ENCODE measurements at regions of chr4 and their contacts with region 1.

Region 1: GRCh38 chr4:55321707-55322264 is 24.3 kb upstream of the SRD5A3 start:
- DNase-seq: no peak
- ATAC-seq: peak in 1 of 2 donors; percentile 65
- H3K4me3 ChIP-seq: no peak overlapping the region
- H3K27ac ChIP-seq: no peak overlapping the region
- H3K4me1 ChIP-seq: no peaks in the 10 kb centered on the region
- H3K27me3 ChIP-seq: no peaks in the 10 kb centered on the region
- CTCF ChIP-seq: peak; percentile 66

Region 2: DNA sequence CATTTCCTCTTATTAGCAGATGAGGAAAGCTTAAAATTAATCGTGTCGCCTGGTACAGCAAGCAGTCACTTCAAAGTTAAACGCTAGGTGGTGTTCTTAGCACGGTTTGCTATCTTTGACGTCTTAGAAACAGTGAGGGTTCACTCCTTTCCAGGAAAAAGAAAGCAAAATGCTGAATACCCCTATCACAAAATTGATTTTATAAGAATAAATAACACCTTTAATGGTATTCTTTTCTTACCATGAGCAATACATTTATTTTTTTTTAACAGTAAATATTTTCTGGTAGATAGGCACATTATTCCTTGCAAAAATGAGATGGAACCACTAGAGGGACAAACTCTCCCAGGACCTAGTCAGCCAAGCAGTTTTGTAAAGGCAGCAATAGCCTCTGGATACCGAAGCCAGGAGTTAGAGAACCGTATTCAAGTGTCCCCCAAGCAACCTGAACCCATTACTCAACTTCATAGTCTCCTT is 350.3 kb before region 1 on chr4:
- intact Hi-C with region 1: loop called (anchors 10 kb)
- DNase-seq: no peak
- ATAC-seq: peak; percentile 64 to 78
- H3K4me3 ChIP-seq: no peak overlapping the region
- H3K27ac ChIP-seq: no peak overlapping the region
- H3K4me1 ChIP-seq: no peaks in the 10 kb centered on the region
- H3K27me3 ChIP-seq: no peaks in the 10 kb centered on the region
- CTCF ChIP-seq: peak; percentile 64

Region 3: GRCh38 chr4:55069248-55069647 is 252.5 kb before region 1 on chr4:
- intact Hi-C with region 1: no loop called
- DNase-seq: no peak
- ATAC-seq: peak; percentile 61 to 65
- H3K4me3 ChIP-seq: no peak overlapping the region
- H3K27ac ChIP-seq: peak overlapping the region; percentile 25
- H3K4me1 ChIP-seq: no peaks in the 10 kb centered on the region
- H3K27me3 ChIP-seq: no peaks in the 10 kb centered on the region
- CTCF ChIP-seq: no peak

Region 4: GRCh38 chr4:55172694-55173287 is 149.0 kb before region 1 on chr4:
- intact Hi-C with region 1: loop called (anchors 5 kb)
- DNase-seq: no peak
- ATAC-seq: peak in 1 of 2 donors; percentile 37
- H3K4me3 ChIP-seq: no peak overlapping the region
- H3K27ac ChIP-seq: peak overlapping the region; percentile 50
- H3K4me1 ChIP-seq: no peaks in the 10 kb centered on the region
- H3K27me3 ChIP-seq: no peaks in the 10 kb centered on the region
- CTCF ChIP-seq: no peak

Measured in lower lobe of right lung (tissue), 2 donors.